ENCODE measurements at regions of chr6 and their contacts with region 1.

Region 1: GRCh38 chr6:26285143-26286134 is 79.6 kb upstream of the BTN3A2 start:
- DNase-seq: peak; percentile 100
- H3K4me3 Mint-ChIP-seq: peak overlapping the region; percentile 91
- H3K27ac Mint-ChIP-seq: peak overlapping the region; percentile 92
- H3K4me1 Mint-ChIP-seq: peaks cover 10% of the 10 kb centered on the region
- H3K27me3 Mint-ChIP-seq: no peaks in the 10 kb centered on the region
- CTCF ChIP-seq: no peak

Region 2: DNA sequence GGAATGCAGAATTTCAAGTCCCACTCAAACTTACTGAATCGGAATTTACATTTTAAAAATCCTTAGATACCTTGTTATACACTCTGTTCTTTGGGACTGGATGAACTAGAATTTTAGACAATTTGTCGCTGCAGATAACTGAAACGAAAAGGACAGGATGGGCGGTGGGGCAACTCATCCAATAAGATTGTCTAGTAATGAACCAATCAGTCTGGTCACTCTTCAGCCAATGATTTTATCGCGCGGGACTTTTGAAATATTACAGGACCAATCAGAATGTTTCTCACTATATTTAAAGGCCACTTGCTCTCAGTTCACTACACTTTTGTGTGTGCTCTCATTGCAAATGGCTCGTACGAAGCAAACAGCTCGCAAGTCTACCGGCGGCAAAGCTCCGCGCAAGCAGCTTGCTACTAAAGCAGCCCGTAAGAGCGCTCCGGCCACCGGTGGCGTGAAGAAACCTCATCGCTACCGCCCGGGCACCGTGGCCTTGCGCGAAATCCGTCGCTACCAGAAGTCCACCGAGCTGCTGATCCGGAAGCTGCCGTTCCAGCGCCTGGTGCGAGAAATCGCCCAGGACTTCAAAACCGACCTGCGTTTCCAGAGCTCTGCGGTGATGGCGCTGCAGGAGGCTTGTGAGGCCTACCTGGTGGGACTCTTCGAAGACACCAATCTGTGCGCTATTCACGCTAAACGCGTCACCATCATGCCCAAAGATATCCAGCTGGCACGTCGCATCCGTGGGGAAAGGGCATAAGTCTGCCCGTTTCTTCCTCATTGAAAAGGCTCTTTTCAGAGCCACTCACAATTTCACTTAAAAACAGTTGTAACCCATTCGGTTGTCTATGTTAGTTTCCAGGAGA is 240.1 kb before region 1 on chr6:
- CTCF ChIA-PET with region 1: no interaction called
- POLR2A ChIA-PET with region 1: interaction called, 16 read pairs
- intact Hi-C with region 1: no loop called
- DNase-seq: peak; percentile 95
- H3K4me3 Mint-ChIP-seq: peak overlapping the region; percentile 80
- H3K27ac Mint-ChIP-seq: peak overlapping the region; percentile 86
- H3K4me1 Mint-ChIP-seq: peaks cover 16% of the 10 kb centered on the region
- H3K27me3 Mint-ChIP-seq: no peaks in the 10 kb centered on the region
- CTCF ChIP-seq: no peak

Region 3: DNA sequence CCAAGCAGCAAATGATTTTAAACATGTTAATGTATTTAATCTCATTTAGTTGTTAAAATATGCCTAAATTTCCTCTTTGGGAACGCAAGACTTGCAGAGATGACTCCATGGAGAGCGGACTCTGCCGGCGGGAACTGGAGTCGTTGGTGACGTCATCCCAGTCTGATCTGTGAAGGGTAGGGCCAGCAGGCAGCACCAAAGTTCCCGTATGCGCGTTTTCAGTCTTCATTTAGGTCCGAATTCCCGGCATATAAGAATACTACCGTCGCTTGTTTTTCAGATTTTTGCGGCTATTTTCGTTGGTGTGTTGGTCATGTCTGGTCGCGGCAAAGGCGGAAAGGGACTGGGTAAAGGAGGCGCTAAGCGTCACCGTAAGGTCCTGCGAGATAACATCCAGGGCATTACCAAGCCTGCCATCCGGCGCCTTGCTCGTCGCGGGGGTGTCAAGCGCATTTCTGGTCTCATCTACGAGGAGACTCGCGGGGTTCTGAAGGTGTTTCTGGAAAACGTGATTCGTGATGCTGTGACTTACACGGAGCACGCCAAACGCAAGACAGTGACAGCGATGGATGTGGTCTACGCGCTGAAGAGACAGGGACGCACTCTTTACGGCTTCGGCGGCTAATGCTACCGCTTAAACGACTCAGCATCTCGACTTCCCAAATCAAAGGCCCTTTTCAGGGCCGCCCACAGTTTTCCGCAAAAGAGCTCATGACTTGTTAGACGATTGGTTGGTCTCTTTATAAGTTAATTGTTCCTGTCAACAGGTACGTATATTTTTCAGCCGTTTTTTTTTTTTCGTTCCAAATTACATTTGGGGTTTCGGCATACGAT is 80.9 kb before region 1 on chr6:
- CTCF ChIA-PET with region 1: no interaction called
- POLR2A ChIA-PET with region 1: interaction called, 81 read pairs
- intact Hi-C with region 1: loop called (anchors 2 kb)
- DNase-seq: peak; percentile 98
- H3K4me3 Mint-ChIP-seq: no peak overlapping the region
- H3K27ac Mint-ChIP-seq: no peak overlapping the region
- H3K4me1 Mint-ChIP-seq: peaks cover 3% of the 10 kb centered on the region
- H3K27me3 Mint-ChIP-seq: no peaks in the 10 kb centered on the region
- CTCF ChIP-seq: no peak

Region 4: GRCh38 chr6:26249957-26250697 is 35.3 kb before region 1 on chr6:
- CTCF ChIA-PET with region 1: no interaction called
- POLR2A ChIA-PET with region 1: interaction called, 4 read pairs
- intact Hi-C with region 1: loop called (anchors 1 kb)
- DNase-seq: peak; percentile 87
- H3K4me3 Mint-ChIP-seq: peak overlapping the region; percentile 94
- H3K27ac Mint-ChIP-seq: peak overlapping the region; percentile 63
- H3K4me1 Mint-ChIP-seq: peaks cover 7% of the 10 kb centered on the region
- H3K27me3 Mint-ChIP-seq: no peaks in the 10 kb centered on the region
- CTCF ChIP-seq: peak; percentile 42

Region 5: DNA sequence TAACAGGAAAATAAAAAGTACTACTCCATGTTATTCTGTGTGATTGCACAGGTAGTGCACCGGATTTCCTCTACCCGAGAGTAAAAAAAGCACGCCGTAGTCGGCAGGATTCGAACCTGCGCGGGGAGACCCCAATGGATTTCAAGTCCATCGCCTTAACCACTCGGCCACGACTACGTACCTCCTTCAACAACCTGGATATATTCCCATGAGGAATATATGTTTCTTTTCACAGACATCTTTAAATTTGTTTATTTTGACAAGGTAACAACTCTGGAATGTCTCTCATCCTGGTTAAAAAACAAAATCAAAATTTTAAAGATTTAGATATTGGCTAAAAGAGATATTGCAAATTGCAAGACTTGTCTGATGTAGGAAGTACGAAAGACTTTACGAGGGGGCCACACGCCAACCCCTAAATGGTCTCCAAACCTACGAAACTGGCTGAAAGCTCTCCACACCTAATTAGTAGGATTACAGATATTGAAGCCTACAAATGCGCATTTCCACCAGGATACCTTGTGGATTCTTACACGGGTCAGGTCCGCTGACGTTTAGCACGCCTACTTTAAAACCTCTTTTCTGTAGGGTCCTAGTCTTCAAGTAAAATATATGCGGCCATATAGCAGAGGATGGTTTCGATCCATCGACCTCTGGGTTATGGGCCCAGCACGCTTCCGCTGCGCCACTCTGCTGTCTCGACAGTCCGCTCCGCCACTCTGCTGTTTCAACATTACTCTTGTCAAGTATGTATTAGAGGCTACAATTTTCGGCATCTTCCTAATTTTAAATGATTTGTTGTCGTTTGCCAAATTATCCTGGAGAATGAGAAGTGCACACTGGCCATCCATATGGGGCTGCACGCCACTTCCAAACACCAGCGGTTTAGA is 27.3 kb after region 1 on chr6:
- CTCF ChIA-PET with region 1: no interaction called
- POLR2A ChIA-PET with region 1: interaction called, 28 read pairs
- intact Hi-C with region 1: loop called (anchors 1 kb)
- DNase-seq: peak; percentile 82
- H3K4me3 Mint-ChIP-seq: peak overlapping the region; percentile 79
- H3K27ac Mint-ChIP-seq: peak overlapping the region; percentile 74
- H3K4me1 Mint-ChIP-seq: peaks cover 26% of the 10 kb centered on the region
- H3K27me3 Mint-ChIP-seq: no peaks in the 10 kb centered on the region
- CTCF ChIP-seq: no peak

Region 6: DNA sequence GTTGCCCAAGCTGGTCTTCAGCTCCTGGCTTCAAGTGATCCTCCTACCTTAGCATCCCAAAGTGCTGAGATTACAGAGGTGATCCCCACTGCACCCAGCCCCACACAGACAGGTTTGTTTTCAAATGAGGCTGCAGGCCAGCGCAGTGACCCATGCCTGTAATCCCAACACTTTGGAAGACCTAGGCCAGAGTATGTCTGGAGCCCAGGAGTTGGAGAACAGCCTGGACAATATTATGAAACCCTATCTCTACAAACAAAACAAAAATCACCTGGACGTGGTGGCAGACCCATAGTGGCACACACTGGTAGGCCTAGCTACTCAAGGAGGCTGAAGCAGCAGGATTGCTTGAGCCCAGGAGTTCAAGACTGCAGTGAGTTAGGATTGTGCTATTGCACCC is 244.8 kb after region 1 on chr6:
- CTCF ChIA-PET with region 1: no interaction called
- POLR2A ChIA-PET with region 1: no interaction called
- intact Hi-C with region 1: no loop called
- DNase-seq: no peak
- H3K4me3 Mint-ChIP-seq: no peak overlapping the region
- H3K27ac Mint-ChIP-seq: no peak overlapping the region
- H3K4me1 Mint-ChIP-seq: peaks cover 12% of the 10 kb centered on the region
- H3K27me3 Mint-ChIP-seq: no peaks in the 10 kb centered on the region
- CTCF ChIP-seq: no peak

Region 7: GRCh38 chr6:27825025-27825793 is 1539.8 kb after region 1 on chr6:
- CTCF ChIA-PET with region 1: no interaction called
- POLR2A ChIA-PET with region 1: interaction called, 13 read pairs
- intact Hi-C with region 1: no loop called
- DNase-seq: no peak
- H3K4me3 Mint-ChIP-seq: peak overlapping the region; percentile 94
- H3K27ac Mint-ChIP-seq: peak overlapping the region; percentile 95
- H3K4me1 Mint-ChIP-seq: peaks cover 10% of the 10 kb centered on the region
- H3K27me3 Mint-ChIP-seq: no peaks in the 10 kb centered on the region
- CTCF ChIP-seq: no peak

Measured in MCF 10A (cell line).